PC-3 (cell line): ENCODE measurements at regions of chr6 and their contacts with region 1.

Region 1: GRCh38 chr6:133923938-133924593 is 29.0 kb upstream of the TBPL1 start:
- DNase-seq: peak; percentile 76
- ATAC-seq: peak; percentile 88
- H3K4me3 ChIP-seq: no peak overlapping the region
- H3K27ac ChIP-seq: no peak overlapping the region
- H3K4me1 ChIP-seq: no peaks in the 10 kb centered on the region
- H3K27me3 ChIP-seq: no peaks in the 10 kb centered on the region
- CTCF ChIP-seq: peak; percentile 88

Region 2: DNA sequence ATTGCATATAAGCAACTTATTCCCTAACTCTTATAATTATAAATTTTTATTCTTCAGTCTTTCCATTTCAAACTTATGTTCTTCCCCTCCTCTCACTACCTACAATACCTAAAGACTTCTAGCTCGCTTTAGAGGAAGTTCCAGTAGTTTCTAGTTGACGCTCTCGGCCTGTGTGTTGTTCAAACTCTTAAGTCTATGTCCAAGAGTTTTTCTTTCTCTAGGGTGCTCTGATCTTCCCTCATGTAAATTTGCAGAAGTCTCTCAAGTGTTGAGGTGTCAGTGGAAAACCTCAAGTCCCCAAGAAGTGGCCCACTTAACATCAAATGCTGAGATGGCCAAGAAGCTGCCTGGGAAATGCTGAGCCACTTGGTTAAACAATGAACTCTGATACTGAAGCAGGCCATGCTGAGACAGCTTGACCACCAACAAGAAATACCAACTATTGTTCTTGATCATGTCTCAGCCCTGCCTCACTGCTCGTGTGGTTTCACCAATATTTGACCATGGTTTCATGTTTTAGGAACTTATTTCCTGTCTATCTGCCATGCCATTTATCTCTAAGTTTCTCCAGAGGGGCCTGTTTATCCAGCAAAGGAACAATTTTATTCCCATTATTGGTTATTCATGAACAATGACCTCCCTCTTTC is 136.1 kb before region 1 on chr6:
- CTCF ChIA-PET with region 1: no interaction called
- POLR2A ChIA-PET with region 1: no interaction called
- intact Hi-C with region 1: no loop called
- DNase-seq: no peak
- ATAC-seq: no peak
- H3K4me3 ChIP-seq: no peak overlapping the region
- H3K27ac ChIP-seq: no peak overlapping the region
- H3K4me1 ChIP-seq: no peaks in the 10 kb centered on the region
- H3K27me3 ChIP-seq: no peaks in the 10 kb centered on the region
- CTCF ChIP-seq: no peak

Region 3: GRCh38 chr6:133973109-133973971 is 49.3 kb after region 1 on chr6:
- CTCF ChIA-PET with region 1: interaction called, 3 read pairs
- POLR2A ChIA-PET with region 1: no interaction called
- intact Hi-C with region 1: loop called (anchors 2 kb)
- DNase-seq: peak; percentile 68
- ATAC-seq: no peak
- H3K4me3 ChIP-seq: no peak overlapping the region
- H3K27ac ChIP-seq: no peak overlapping the region
- H3K4me1 ChIP-seq: peaks cover 19% of the 10 kb centered on the region
- H3K27me3 ChIP-seq: no peaks in the 10 kb centered on the region
- CTCF ChIP-seq: peak; percentile 80